AG04449 (cell line): ENCODE measurements at regions of chr10 and their contacts with region 1.

Region 1: DNA sequence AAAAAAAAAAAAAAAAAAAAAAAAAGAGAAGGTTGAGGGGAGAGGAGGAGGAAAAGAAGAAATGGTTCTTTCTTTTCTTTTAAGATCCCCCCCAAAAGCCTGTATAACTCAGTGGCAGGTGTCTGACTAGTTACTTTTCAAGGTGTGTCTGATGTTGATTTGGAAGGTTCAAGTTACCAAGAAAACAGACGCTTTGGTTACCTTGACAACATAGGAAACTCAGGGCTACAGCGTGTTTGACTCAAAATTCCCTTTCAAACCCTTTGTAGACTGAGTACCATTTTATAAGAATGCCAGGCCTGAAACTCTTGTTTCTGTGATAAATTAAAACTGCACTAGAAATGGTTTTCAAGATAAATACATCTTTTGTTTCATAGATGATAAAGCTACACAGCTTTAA is 286.8 kb downstream of the SKIDA1 start:
- DNase-seq: no peak
- H3K4me3 ChIP-seq: no peak overlapping the region
- CTCF ChIP-seq: no peak

Region 2: DNA sequence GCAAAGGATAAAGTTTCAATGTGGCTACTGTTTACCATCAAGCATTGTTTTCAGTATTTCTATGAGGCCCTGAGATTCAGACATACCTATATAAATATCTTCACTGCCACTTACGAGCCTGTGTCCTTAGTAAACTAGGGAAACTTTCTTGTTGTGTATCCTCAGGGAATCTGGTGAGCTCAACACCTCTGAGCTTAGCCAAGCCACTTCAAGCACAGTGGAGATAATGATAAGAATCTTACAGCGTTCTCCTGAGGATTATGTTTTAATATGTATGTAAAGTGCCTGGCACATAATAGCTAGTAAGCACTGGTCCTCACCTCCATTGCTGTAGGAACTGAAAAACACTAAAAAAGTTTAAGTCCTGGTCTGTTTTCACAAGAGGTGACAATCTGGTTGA is 18.5 kb after region 1 on chr10:
- CTCF ChIA-PET with region 1: interaction called, 12 read pairs
- POLR2A ChIA-PET with region 1: no interaction called
- DNase-seq: no peak
- H3K4me3 ChIP-seq: no peak overlapping the region
- CTCF ChIP-seq: no peak